Naive thymus-derived CD4-positive, alpha-beta T cell (primary cell): ENCODE measurements at regions of chr10 and their contacts with region 1.

Region 1: GRCh38 chr10:27504007-27504807 is at the start of gene RAB18:
- DNase-seq: peak; percentile 93 to 99 (median 98)
- ATAC-seq: peak; percentile 97
- H3K4me3 ChIP-seq: peak within 1 kb of the TSS; percentile 82
- H3K4me3 Mint-ChIP-seq: peak within 1 kb of the TSS; percentile 95 to 100 (median 99)
- H3K27ac ChIP-seq: peak within 1 kb of the TSS; percentile 87
- H3K27ac Mint-ChIP-seq: peak within 1 kb of the TSS; percentile 96 to 99 (median 98)
- H3K4me1 ChIP-seq: peaks cover 13 to 18% of the 10 kb centered on the region in 2 donors
- H3K4me1 Mint-ChIP-seq: peaks cover 39 to 59% (median 55%) of the 10 kb centered on the region in 7 donors
- H3K27me3 ChIP-seq: no peaks in the 10 kb centered on the region
- H3K27me3 Mint-ChIP-seq: peaks cover 0 to 7% (median 0%) of the 10 kb centered on the region in 5 donors
- total RNA-seq, gene RAB18: 69.1 to 96.1 (median 73.6) TPM

Region 2: GRCh38 chr10:27099916-27100812 is 404.0 kb before region 1 on chr10 and contains the start of gene ANKRD26:
- CTCF ChIA-PET with region 1: no interaction called
- POLR2A ChIA-PET with region 1: interaction called, 6 read pairs
- intact Hi-C with region 1: loop called in 1 of 2 experiments (anchors 1 kb)
- DNase-seq: peak; percentile 92 to 97 (median 95)
- ATAC-seq: peak; percentile 76
- H3K4me3 ChIP-seq: peak within 1 kb of the TSS; percentile 89
- H3K4me3 Mint-ChIP-seq: peak within 1 kb of the TSS; percentile 86 to 97 (median 92)
- H3K27ac ChIP-seq: peak within 1 kb of the TSS; percentile 84
- H3K27ac Mint-ChIP-seq: peak within 1 kb of the TSS; percentile 92 to 99 (median 98)
- H3K4me1 ChIP-seq: peaks cover 18 to 28% of the 10 kb centered on the region in 2 donors
- H3K4me1 Mint-ChIP-seq: peaks cover 30 to 64% (median 51%) of the 10 kb centered on the region in 7 donors
- H3K27me3 ChIP-seq: no peaks in the 10 kb centered on the region
- H3K27me3 Mint-ChIP-seq: peaks cover 0 to 2% (median 0%) of the 10 kb centered on the region in 5 donors
- total RNA-seq, gene ANKRD26: 6.4 to 14.2 (median 8.9) TPM

Region 3: GRCh38 chr10:27464993-27465392 is 39.2 kb before region 1 on chr10:
- CTCF ChIA-PET with region 1: interaction called, 4 read pairs
- POLR2A ChIA-PET with region 1: interaction called, 11 read pairs
- intact Hi-C with region 1: loop called (anchors 1 to 2 kb)
- DNase-seq: peak in 7 of 9 donors; percentile 33 to 69 (median 56)
- ATAC-seq: peak; percentile 81
- H3K4me3 ChIP-seq: no peak overlapping the region
- H3K4me3 Mint-ChIP-seq: peak overlapping the region; percentile 16 to 79 (median 51)
- H3K27ac ChIP-seq: peak overlapping the region; percentile 25
- H3K27ac Mint-ChIP-seq: peak overlapping the region; percentile 51 to 90 (median 81)
- H3K4me1 ChIP-seq: peaks cover 9 to 11% of the 10 kb centered on the region in 2 donors
- H3K4me1 Mint-ChIP-seq: peaks cover 29 to 44% (median 37%) of the 10 kb centered on the region in 7 donors
- H3K27me3 ChIP-seq: no peaks in the 10 kb centered on the region
- H3K27me3 Mint-ChIP-seq: peaks cover 0 to 6% (median 0%) of the 10 kb centered on the region in 5 donors

Region 4: DNA sequence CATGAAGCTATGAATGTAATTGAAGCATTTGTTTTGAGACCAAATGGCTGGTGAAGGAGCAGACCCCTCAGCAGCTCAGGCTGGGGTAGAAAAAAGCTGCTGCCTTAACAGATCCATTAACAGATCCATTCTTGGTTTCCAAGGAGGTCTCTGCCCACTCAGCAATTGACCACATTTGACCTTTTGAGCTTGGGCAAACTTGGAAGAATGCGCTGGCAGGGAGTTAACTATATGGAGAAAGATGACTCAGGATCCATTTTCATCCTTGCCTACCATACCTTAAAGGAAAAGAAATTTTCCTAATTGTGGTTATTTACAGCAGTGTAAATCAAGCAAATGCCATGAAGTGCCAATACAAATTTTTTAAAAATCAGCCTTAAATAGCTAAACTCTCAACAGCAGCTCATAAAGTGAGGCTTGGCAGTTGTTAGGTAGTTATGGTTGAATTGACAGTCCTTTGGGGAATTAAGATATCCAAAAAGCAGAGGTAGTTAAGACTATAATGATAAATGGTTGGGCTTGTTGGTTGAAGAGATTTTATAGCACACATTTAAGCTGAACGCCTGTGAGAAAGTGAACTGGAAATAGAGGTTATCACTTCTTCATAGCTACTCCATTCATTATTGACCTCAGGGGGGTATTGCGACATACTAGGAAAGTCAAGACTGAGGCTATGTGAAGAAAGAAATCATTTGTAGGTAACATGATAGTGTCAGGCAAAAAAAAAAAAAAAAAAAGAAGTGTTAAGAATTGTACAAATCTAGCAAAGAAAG is 157.5 kb after region 1 on chr10:
- CTCF ChIA-PET with region 1: no interaction called
- POLR2A ChIA-PET with region 1: no interaction called
- intact Hi-C with region 1: loop called in 1 of 2 experiments (anchors 2 kb)
- DNase-seq: no peak
- ATAC-seq: no peak
- H3K4me3 ChIP-seq: no peak overlapping the region
- H3K4me3 Mint-ChIP-seq: no peak overlapping the region
- H3K27ac ChIP-seq: no peak overlapping the region
- H3K27ac Mint-ChIP-seq: no peak overlapping the region
- H3K4me1 ChIP-seq: no peaks in the 10 kb centered on the region
- H3K4me1 Mint-ChIP-seq: peaks cover 0 to 7% (median 0%) of the 10 kb centered on the region in 7 donors
- H3K27me3 ChIP-seq: peaks cover 0 to 4% of the 10 kb centered on the region in 2 donors
- H3K27me3 Mint-ChIP-seq: peaks cover 31 to 53% (median 39%) of the 10 kb centered on the region in 5 donors

Region 5: DNA sequence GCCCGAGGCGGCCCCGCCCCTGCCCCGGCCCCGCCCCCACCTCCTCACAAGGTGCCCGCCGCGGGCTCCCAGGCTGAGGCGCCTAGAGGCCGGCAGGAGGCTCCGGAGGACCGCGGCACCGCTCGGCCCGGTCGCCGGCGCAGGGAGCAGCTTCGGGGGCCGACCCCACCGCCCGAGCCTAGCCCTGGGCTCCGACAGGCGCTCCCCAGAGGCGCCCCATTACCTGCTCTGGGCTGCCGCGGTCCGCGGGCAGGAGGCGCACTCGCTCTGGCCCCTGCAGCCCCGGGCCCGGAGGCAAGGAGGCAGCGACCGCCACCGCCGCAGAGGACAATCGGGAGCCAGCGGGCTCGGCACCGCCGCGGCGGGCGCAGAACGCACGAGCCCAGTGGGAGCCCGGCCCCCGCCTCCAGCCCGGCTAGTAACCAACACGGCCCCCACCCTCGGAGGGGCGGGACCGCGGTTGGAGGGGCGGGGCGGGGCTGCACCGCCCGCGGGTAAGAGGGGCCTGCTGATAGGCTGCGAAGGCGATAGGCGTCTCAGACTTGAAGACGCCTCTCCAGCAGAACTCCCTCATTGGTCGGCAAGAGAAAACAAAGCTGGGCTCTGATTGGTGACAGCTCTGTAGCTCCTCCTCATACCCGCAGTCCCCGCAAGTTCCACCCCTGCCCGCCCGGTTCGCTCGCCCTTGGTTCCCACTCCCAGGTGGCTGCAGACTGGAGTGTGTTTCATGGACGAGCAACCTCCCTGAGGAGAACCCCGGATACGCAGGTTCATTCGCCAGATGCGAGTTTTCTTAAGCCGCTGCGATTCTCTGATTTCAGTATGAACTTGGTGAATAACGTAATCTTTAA is 798.7 kb after region 1 on chr10 and contains the start of gene MPP7:
- CTCF ChIA-PET with region 1: no interaction called
- POLR2A ChIA-PET with region 1: interaction called, 3 read pairs
- intact Hi-C with region 1: loop called (anchors 1 to 5 kb)
- DNase-seq: peak; percentile 96 to 98 (median 97)
- ATAC-seq: peak; percentile 97
- H3K4me3 ChIP-seq: peak within 1 kb of the TSS; percentile 92
- H3K4me3 Mint-ChIP-seq: peak within 1 kb of the TSS; percentile 85 to 99 (median 93)
- H3K27ac ChIP-seq: peak within 1 kb of the TSS; percentile 86
- H3K27ac Mint-ChIP-seq: peak within 1 kb of the TSS; percentile 67 to 98 (median 94)
- H3K4me1 ChIP-seq: peaks cover 8 to 42% of the 10 kb centered on the region in 2 donors
- H3K4me1 Mint-ChIP-seq: peaks cover 27 to 80% (median 67%) of the 10 kb centered on the region in 7 donors
- H3K27me3 ChIP-seq: no peaks in the 10 kb centered on the region
- H3K27me3 Mint-ChIP-seq: peaks cover 0 to 51% (median 0%) of the 10 kb centered on the region in 5 donors
- total RNA-seq, gene MPP7: 9.7 to 44.7 (median 36.1) TPM

Region 6: DNA sequence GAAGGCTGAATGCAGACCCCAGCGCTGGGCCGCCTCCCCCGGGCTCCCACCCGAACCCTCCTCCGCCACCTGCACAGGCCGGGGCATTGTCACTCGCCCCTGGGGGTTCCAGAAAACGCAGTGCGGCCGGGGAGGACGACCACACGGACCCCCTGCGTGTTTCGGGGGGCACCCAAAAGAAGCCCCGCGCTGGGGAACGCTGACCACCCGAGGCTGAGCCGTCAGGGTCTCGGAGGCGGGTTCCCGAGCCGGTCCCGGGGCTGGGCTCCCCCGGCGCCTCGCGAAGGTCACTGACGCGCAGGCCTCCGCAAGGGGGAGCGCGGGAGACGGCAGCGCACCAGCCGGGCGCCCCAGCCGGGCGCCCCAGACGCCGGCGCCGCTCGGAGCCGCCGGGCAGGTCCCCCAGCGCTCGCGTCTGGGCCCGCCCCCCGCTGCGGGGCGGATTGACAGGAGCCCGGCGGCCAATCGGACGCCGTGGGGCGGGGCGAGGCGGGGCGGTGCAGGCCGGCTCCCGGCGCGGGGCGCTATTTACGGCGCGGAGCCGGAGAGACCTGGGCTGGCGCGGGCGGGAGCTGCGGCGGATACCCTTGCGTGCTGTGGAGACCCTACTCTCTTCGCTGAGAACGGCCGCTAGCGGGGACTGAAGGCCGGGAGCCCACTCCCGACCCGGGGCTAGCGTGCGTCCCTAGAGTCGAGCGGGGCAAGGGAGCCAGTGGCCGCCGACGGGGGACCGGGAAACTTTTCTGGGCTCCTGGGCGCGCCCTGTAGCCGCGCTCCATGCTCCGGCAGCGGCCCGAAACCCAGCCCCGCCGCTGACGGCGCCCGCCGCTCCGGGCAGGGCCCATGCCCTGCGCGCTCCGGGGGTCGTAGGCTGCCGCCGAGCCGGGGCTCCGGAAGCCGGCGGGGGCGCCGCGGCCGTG is 1173.0 kb after region 1 on chr10 and contains the start of gene BAMBI:
- CTCF ChIA-PET with region 1: no interaction called
- POLR2A ChIA-PET with region 1: no interaction called
- intact Hi-C with region 1: loop called in 1 of 2 experiments (anchors 1 kb)
- DNase-seq: peak; percentile 86 to 95 (median 90)
- ATAC-seq: peak; percentile 97
- H3K4me3 ChIP-seq: peak within 1 kb of the TSS; percentile 57
- H3K4me3 Mint-ChIP-seq: peak within 1 kb of the TSS; percentile 79 to 94 (median 84)
- H3K27ac ChIP-seq: no peak within 1 kb of the TSS
- H3K27ac Mint-ChIP-seq: peak within 1 kb of the TSS in 3 of 9 donors; percentile 24 to 52 (median 43)
- H3K4me1 ChIP-seq: peaks cover 0 to 26% of the 10 kb centered on the region in 2 donors
- H3K4me1 Mint-ChIP-seq: peaks cover 19 to 32% (median 26%) of the 10 kb centered on the region in 7 donors
- H3K27me3 ChIP-seq: peaks cover 11 to 20% of the 10 kb centered on the region in 2 donors
- H3K27me3 Mint-ChIP-seq: peaks cover 63 to 80% (median 70%) of the 10 kb centered on the region in 5 donors
- total RNA-seq, gene BAMBI: 0.12 to 1.6 (median 0.80) TPM in 4 of 5 experiments, not detected in the other